ENCODE measurements at regions of chr3 and their contacts with region 1.

Region 1: DNA sequence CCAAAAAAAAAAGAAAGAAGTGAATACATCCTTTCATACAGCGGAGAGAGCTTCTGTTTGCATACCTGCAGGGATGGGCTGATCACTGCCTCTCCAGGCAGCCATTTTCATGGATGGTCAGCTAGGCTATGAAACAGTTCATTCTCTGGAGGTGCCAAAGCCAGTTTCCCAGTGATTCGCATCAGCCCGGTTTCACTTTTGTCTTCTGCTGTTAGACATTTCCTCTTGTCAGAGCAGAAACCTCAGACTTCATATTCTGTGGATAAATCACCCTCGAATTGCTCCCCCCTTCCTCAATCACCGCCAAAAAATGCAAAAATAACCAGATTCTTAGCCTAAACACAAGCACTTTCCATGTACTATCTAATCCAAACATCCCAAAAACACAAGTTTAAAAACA is 225.6 kb downstream of the ADAMTS9 start:
- DNase-seq: no peak
- ATAC-seq: no peak
- H3K4me3 ChIP-seq: no peak overlapping the region
- H3K27ac ChIP-seq: no peak overlapping the region
- H3K4me1 ChIP-seq: no peaks in the 10 kb centered on the region
- H3K27me3 ChIP-seq: no peaks in the 10 kb centered on the region
- CTCF ChIP-seq: no peak
- EP300 ChIP-seq: no peak
- POLR2A ChIP-seq: no peak
- RAD21 ChIP-seq: no peak

Region 2: GRCh38 chr3:64355401-64355807 is 106.8 kb before region 1 on chr3:
- CTCF ChIA-PET with region 1: interaction called, 5 read pairs
- POLR2A ChIA-PET with region 1: no interaction called
- RAD21 ChIA-PET with region 1: interaction called, 10 read pairs
- SMC1A ChIA-PET with region 1: interaction called, 9 read pairs
- in situ Hi-C with region 1: no loop called
- intact Hi-C with region 1: no loop called
- DNase-seq: no peak
- ATAC-seq: peak; percentile 48
- H3K4me3 ChIP-seq: no peak overlapping the region
- H3K27ac ChIP-seq: no peak overlapping the region
- H3K4me1 ChIP-seq: no peaks in the 10 kb centered on the region
- H3K27me3 ChIP-seq: no peaks in the 10 kb centered on the region; a peak in 1 of 4 replicates
- CTCF ChIP-seq: no peak
- EP300 ChIP-seq: no peak
- POLR2A ChIP-seq: no peak
- RAD21 ChIP-seq: no peak

Region 3: DNA sequence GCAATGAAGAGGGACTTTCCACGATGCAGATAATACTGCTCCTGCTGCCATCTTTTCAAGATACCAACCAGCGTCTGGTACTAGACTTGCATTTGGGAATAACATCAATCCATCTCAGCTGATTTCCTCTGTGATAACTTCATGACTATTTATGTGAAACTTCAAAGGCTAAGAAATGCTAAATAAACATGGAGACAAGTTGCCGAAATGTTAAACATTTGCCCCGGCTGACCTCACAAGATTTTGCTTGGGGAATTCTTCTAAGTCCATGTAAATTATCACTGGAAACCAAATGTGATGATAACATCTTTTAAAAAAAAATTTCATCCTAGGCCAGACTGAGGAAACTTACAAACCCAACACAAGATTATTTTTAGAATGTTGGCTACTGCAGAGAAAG is 51.1 kb before region 1 on chr3:
- CTCF ChIA-PET with region 1: interaction called, 70 read pairs
- POLR2A ChIA-PET with region 1: interaction called, 3 read pairs
- RAD21 ChIA-PET with region 1: interaction called, 17 read pairs
- SMC1A ChIA-PET with region 1: interaction called, 72 read pairs
- in situ Hi-C with region 1: no loop called
- intact Hi-C with region 1: no loop called
- DNase-seq: no peak
- ATAC-seq: no peak
- H3K4me3 ChIP-seq: no peak overlapping the region
- H3K27ac ChIP-seq: no peak overlapping the region
- H3K4me1 ChIP-seq: no peaks in the 10 kb centered on the region
- H3K27me3 ChIP-seq: no peaks in the 10 kb centered on the region
- CTCF ChIP-seq: no peak
- EP300 ChIP-seq: no peak
- POLR2A ChIP-seq: no peak
- RAD21 ChIP-seq: no peak

Region 4: GRCh38 chr3:64440498-64440897 is 21.7 kb before region 1 on chr3:
- CTCF ChIA-PET with region 1: interaction called, 6 read pairs
- POLR2A ChIA-PET with region 1: no interaction called
- RAD21 ChIA-PET with region 1: interaction called, 7 read pairs
- SMC1A ChIA-PET with region 1: interaction called, 17 read pairs
- in situ Hi-C with region 1: no loop called
- intact Hi-C with region 1: no loop called
- DNase-seq: no peak
- ATAC-seq: no peak
- H3K4me3 ChIP-seq: no peak overlapping the region
- H3K27ac ChIP-seq: no peak overlapping the region
- H3K4me1 ChIP-seq: no peaks in the 10 kb centered on the region
- H3K27me3 ChIP-seq: peaks cover 3 to 4% of the 10 kb centered on the region in 2 experiments; a peak in 2 of 4 replicates
- CTCF ChIP-seq: no peak
- EP300 ChIP-seq: no peak
- POLR2A ChIP-seq: no peak
- RAD21 ChIP-seq: no peak

Region 5: DNA sequence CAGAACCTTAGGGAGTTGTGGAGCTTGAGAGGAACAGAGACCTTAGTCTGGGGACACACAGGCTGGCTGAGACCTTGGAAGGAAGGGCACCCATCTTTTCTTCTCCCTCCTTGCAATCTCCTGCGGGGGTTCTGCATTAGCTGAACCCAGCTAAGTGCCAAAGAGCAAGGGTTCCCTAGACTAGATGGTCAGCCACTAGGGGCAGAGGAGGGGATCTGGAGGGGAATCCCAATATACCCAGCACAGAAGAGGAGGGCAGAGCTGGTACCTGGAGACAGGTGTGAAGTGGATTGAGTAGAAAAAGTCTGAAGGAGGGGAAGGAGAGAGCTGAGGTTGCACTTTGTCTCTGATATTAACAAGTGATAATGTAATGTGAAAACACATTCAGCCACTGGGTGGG is 12.8 kb after region 1 on chr3:
- CTCF ChIA-PET with region 1: interaction called, 13 read pairs
- POLR2A ChIA-PET with region 1: no interaction called
- RAD21 ChIA-PET with region 1: interaction called, 5 read pairs
- SMC1A ChIA-PET with region 1: interaction called, 17 read pairs
- in situ Hi-C with region 1: no loop called
- intact Hi-C with region 1: no loop called
- DNase-seq: no peak
- ATAC-seq: no peak
- H3K4me3 ChIP-seq: no peak overlapping the region
- H3K27ac ChIP-seq: no peak overlapping the region
- H3K4me1 ChIP-seq: no peaks in the 10 kb centered on the region
- H3K27me3 ChIP-seq: no peaks in the 10 kb centered on the region
- CTCF ChIP-seq: no peak
- EP300 ChIP-seq: no peak
- POLR2A ChIP-seq: no peak
- RAD21 ChIP-seq: no peak

Region 6: GRCh38 chr3:64748244-64748904 is 286.2 kb after region 1 on chr3:
- CTCF ChIA-PET with region 1: no interaction called
- POLR2A ChIA-PET with region 1: no interaction called
- RAD21 ChIA-PET with region 1: no interaction called
- SMC1A ChIA-PET with region 1: no interaction called
- in situ Hi-C with region 1: no loop called
- intact Hi-C with region 1: no loop called
- DNase-seq: no peak
- ATAC-seq: no peak
- H3K4me3 ChIP-seq: no peak overlapping the region
- H3K27ac ChIP-seq: no peak overlapping the region
- H3K4me1 ChIP-seq: no peaks in the 10 kb centered on the region
- H3K27me3 ChIP-seq: no peaks in the 10 kb centered on the region
- CTCF ChIP-seq: no peak
- EP300 ChIP-seq: no peak
- POLR2A ChIP-seq: no peak
- RAD21 ChIP-seq: no peak

Region 7: DNA sequence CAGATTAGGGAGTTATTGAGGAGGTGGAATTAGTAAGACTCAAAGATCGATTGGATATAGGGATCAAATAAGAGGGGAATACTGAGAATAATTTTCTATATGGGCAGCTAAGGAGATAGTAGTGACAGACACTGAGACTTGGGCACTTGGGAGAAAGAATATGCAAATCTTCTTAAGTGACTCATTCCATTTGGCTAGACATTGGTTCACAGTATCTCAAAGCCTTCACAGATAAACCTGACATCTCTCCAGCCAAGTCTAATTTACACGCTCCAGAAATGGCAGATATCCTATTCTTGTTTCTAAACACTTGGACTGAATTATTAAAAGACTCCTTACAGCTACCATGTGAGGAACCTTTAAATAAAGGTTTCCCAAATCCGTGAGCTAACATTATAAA is 330.2 kb after region 1 on chr3:
- CTCF ChIA-PET with region 1: no interaction called
- POLR2A ChIA-PET with region 1: no interaction called
- RAD21 ChIA-PET with region 1: no interaction called
- SMC1A ChIA-PET with region 1: no interaction called
- in situ Hi-C with region 1: no loop called
- intact Hi-C with region 1: no loop called
- DNase-seq: no peak
- ATAC-seq: no peak
- H3K4me3 ChIP-seq: no peak overlapping the region
- H3K27ac ChIP-seq: no peak overlapping the region
- H3K4me1 ChIP-seq: no peaks in the 10 kb centered on the region
- H3K27me3 ChIP-seq: no peaks in the 10 kb centered on the region
- CTCF ChIP-seq: no peak
- EP300 ChIP-seq: no peak
- POLR2A ChIP-seq: no peak
- RAD21 ChIP-seq: no peak

Measured in GM12878 (cell line).